Left cardiac atrium (tissue), 4 donors: ENCODE measurements at regions of chr10 and their contacts with region 1.

Region 1: GRCh38 chr10:102729029-102730026 is 14.4 kb upstream of the WBP1L start:
- DNase-seq: peak; percentile 91
- ATAC-seq: peak; percentile 94 to 97

Region 2: DNA sequence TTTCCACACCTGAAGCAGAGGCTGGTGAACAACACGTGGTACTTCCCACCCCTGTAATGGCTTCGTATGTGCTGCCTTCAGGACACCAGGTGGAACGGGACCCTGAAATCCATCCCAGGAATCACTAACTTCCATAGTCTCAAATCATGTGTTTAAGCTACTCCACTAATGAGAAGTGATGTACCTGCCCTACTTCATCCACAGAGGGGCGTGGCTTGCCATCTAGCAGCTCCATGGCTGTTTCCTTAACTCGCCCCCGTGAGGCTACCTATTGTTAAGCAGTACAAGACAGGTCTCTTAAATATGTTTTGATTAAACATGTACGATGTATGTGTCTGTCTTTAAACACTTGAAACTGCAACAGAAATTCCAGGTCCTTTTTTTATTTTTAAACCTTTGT is 46.9 kb before region 1 on chr10:
- intact Hi-C with region 1: no loop called
- DNase-seq: no peak
- ATAC-seq: no peak

Region 3: DNA sequence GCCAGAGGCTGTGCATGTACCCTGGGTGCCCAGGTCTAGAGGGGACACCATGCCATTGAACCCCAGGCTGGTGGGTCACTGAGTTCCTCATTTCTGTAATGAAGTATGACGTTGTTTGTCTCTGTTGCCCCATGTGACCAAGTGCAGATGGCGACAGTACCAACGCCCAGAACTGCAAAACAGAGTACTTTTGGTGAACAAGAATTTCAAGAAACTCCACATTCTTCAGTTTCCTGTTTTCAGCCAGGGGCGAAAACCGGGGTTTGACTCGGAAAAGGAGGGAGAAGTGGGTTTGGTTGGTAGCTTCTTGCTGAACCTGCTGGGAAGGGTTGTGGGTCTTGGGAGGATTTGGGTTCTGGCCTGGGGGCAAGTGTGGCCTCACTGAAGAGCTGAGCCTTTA is 89.7 kb after region 1 on chr10:
- intact Hi-C with region 1: no loop called
- DNase-seq: no peak
- ATAC-seq: peak in 1 of 2 donors; percentile 3

Region 4: GRCh38 chr10:102835007-102835482 is 105.7 kb after region 1 on chr10:
- intact Hi-C with region 1: loop called in 1 of 2 experiments (anchors 2 kb)
- DNase-seq: peak; percentile 80
- ATAC-seq: peak; percentile 93 to 94

Region 5: GRCh38 chr10:102904346-102904745 is 175.0 kb after region 1 on chr10:
- intact Hi-C with region 1: loop called (anchors 2 to 5 kb)
- DNase-seq: no peak
- ATAC-seq: no peak

Region 6: GRCh38 chr10:103069453-103070331 is 340.4 kb after region 1 on chr10:
- intact Hi-C with region 1: loop called in 1 of 2 experiments (anchors 10 kb)
- DNase-seq: peak; percentile 65
- ATAC-seq: peak; percentile 79 to 82